ENCODE measurements at regions of chr4 and their contacts with region 1.

Region 1: GRCh38 chr4:122922877-122923511 is 597 bp upstream of the NUDT6 start:
- DNase-seq: no peak
- H3K4me3 ChIP-seq: peak overlapping the region; percentile 74 to 83
- H3K27ac ChIP-seq: peak overlapping the region; percentile 82
- H3K4me1 ChIP-seq: peaks cover 24% of the 10 kb centered on the region
- H3K27me3 ChIP-seq: no peaks in the 10 kb centered on the region
- CTCF ChIP-seq: no peak
- POLR2A ChIP-seq: no peak

Region 2: GRCh38 chr4:122732329-122733026 is 190.5 kb before region 1 on chr4 and contains the start of gene BBS12:
- intact Hi-C with region 1: loop called (anchors 10 kb)
- DNase-seq: peak; percentile 98 to 99
- H3K4me3 ChIP-seq: peak within 1 kb of the TSS; percentile 72 to 74
- H3K27ac ChIP-seq: peak within 1 kb of the TSS; percentile 70
- H3K4me1 ChIP-seq: peaks cover 16% of the 10 kb centered on the region
- H3K27me3 ChIP-seq: no peaks in the 10 kb centered on the region
- CTCF ChIP-seq: peak in 1 of 3 experiments; percentile 41
- POLR2A ChIP-seq: no peak
- total RNA-seq, gene BBS12: 2.2 TPM

Region 3: DNA sequence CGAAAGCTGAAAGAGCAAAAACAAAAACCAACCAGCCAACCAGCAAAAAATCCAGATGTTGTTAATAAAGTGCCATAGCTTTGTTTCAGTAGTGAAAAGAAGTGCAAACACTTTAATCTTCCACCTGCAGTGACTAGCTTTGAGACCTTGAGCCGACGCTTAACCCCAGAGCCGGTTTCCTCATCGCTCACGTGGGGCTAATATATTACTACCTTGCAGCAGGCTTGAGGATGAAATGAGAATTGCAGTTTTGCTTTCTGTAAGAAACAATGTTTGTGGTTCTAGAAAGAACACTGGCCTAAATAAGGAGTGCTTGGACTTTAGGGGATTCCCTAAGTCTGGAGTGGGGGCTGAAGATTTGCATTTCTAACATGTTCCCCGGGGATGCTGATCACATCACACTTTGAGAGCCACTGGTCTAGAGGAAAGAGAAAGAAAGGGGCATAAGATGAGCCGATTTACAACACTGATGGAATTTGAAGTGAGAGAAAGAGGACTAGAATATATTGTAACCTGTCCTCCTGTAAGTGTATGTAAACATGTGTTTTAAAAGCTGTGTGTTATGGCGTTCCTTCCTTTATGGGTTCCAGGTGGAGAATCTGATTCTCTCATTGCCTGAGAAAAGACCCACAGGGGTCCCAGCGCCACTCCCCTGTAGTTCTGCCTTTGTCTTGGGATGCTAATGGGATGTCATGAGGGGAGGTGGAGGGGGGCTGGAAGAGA is 95.0 kb before region 1 on chr4:
- intact Hi-C with region 1: loop called (anchors 5 kb)
- DNase-seq: no peak
- H3K4me3 ChIP-seq: peak overlapping the region; percentile 55 to 86
- H3K27ac ChIP-seq: peak overlapping the region; percentile 90
- H3K4me1 ChIP-seq: peaks cover 23% of the 10 kb centered on the region
- H3K27me3 ChIP-seq: no peaks in the 10 kb centered on the region
- CTCF ChIP-seq: peak in 1 of 3 experiments; percentile 18
- POLR2A ChIP-seq: no peak

Measured in vagina (tissue), 2 donors.